Mammary epithelial cell (primary cell): ENCODE measurements at regions of chr7 and their contacts with region 1.

Region 1: DNA sequence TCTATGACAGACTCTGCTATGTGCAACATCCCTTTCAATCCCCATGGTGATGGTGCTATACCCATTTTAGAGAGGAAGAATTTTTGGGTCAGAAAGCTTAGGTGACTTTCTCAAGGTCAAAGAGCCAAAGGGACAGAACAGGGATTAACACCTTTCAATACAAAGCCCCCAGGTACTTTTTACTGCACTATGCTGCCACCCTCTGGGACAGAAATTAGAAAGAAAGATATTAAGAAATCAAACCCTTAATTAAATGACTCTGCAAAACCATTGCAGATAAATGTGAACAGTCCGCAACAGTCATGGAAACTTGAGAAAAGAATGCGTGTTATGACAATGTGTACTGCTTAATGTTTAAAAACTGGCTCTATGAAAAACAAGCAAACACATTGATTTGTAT is 673.7 kb downstream of the MAGI2 start:
- DNase-seq: no peak
- H3K4me3 ChIP-seq: no peak overlapping the region
- H3K27ac ChIP-seq: no peak overlapping the region
- H3K4me1 ChIP-seq: no peaks in the 10 kb centered on the region
- H3K27me3 ChIP-seq: no peaks in the 10 kb centered on the region
- CTCF ChIP-seq: peak in 1 of 2 donors; percentile 17

Region 2: DNA sequence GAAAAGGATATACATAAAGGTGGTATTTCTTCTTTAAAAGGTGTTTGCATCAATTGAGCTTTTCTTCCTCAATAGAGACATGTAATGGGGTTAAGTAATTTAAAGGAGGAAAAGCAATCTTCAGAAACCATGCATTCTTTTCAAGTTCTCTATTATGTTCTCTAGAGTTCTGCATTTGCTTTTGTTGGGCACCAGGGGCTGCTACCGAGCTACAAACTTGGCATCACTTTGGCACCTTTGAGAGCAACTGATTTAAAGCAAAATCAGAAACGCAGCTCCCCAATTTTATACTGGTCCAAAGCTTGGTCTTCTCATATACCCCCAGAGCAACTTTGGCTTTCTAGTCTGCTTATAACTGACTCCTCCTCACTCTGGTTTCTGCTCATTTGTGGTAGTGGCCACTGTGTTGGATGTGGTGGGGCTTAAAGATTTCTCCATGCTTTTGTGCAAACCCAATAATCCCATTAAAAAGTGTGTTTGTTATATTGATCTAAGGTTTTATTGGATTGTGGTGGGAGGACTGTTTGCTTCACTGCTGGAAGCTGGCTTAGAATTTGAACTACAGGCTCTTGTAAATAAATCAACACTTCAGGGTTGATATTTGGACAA is 269.1 kb before region 1 on chr7:
- CTCF ChIA-PET with region 1: no interaction called
- dilution Hi-C with region 1: no loop called
- in situ Hi-C with region 1: no loop called
- intact Hi-C with region 1: loop called (anchors 2 kb)
- DNase-seq: peak; percentile 15
- H3K4me3 ChIP-seq: no peak overlapping the region
- H3K27ac ChIP-seq: no peak overlapping the region
- H3K4me1 ChIP-seq: no peaks in the 10 kb centered on the region
- H3K27me3 ChIP-seq: no peaks in the 10 kb centered on the region
- CTCF ChIP-seq: peak; percentile 82 to 90

Region 3: GRCh38 chr7:78587443-78588044 is 192.2 kb before region 1 on chr7:
- CTCF ChIA-PET with region 1: interaction called, 3 read pairs
- dilution Hi-C with region 1: no loop called
- in situ Hi-C with region 1: no loop called
- intact Hi-C with region 1: loop called (anchors 1 kb)
- DNase-seq: no peak
- H3K4me3 ChIP-seq: no peak overlapping the region
- H3K27ac ChIP-seq: no peak overlapping the region
- H3K4me1 ChIP-seq: no peaks in the 10 kb centered on the region
- H3K27me3 ChIP-seq: peaks cover 3% of the 10 kb centered on the region
- CTCF ChIP-seq: peak; percentile 52 to 56

Region 4: GRCh38 chr7:78607099-78607498 is 172.7 kb before region 1 on chr7:
- CTCF ChIA-PET with region 1: no interaction called
- dilution Hi-C with region 1: no loop called
- in situ Hi-C with region 1: no loop called
- intact Hi-C with region 1: loop called (anchors 1 kb)
- DNase-seq: no peak
- H3K4me3 ChIP-seq: no peak overlapping the region
- H3K27ac ChIP-seq: no peak overlapping the region
- H3K4me1 ChIP-seq: no peaks in the 10 kb centered on the region
- H3K27me3 ChIP-seq: no peaks in the 10 kb centered on the region
- CTCF ChIP-seq: peak; percentile 37 to 59